PC-9 (cell line): ENCODE measurements at regions of chr20 and their contacts with region 1.

Region 1: DNA sequence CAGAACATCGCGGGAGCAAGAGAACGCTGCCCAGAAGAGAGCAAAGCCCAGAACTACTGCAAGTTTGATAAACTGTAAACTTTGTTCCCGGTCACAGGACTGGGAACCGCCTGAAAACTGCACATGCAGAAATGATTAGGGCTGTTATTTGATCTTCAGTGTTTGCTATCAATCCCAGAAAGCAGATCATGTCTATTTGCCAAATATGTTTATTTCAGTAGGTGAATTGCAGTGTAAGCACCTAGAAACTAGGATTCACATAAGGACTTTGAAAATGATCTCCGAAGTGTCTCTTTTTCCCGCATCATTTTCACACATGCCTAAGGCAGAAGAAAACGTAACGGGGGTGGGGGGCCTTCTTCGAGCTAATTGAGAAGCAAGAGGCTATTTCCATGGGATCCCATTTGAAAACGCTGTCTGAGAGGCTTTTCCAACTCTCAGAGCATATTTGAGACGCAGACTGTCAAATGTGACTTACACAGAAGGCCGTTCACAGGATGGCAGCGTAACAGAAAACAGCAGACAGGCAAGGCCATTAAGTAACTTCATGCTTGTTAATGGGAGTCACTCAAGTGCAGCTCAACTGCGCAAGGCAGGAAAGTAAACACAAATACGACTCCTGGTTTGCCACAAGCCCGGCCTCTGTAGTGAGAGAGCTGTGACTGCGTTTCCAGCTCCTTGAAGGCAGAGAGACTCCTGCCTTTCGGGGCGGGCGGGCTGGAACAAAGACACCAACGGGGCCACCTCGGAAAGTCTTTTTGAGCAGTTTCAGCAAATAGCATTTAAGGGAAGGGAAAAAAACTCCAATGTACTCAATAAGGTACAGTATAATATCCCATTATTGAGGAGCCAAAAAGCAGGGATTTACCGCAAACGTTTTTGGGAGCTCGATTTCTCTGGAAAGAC is 144.7 kb upstream of the ZNF217 start:
- DNase-seq: peak; percentile 85 to 97
- H3K4me3 ChIP-seq: peak overlapping the region; percentile 62
- H3K27ac ChIP-seq: peak overlapping the region; percentile 98
- H3K4me1 ChIP-seq: peaks cover 89% of the 10 kb centered on the region
- H3K27me3 ChIP-seq: no peaks in the 10 kb centered on the region
- CTCF ChIP-seq: no peak

Region 2: DNA sequence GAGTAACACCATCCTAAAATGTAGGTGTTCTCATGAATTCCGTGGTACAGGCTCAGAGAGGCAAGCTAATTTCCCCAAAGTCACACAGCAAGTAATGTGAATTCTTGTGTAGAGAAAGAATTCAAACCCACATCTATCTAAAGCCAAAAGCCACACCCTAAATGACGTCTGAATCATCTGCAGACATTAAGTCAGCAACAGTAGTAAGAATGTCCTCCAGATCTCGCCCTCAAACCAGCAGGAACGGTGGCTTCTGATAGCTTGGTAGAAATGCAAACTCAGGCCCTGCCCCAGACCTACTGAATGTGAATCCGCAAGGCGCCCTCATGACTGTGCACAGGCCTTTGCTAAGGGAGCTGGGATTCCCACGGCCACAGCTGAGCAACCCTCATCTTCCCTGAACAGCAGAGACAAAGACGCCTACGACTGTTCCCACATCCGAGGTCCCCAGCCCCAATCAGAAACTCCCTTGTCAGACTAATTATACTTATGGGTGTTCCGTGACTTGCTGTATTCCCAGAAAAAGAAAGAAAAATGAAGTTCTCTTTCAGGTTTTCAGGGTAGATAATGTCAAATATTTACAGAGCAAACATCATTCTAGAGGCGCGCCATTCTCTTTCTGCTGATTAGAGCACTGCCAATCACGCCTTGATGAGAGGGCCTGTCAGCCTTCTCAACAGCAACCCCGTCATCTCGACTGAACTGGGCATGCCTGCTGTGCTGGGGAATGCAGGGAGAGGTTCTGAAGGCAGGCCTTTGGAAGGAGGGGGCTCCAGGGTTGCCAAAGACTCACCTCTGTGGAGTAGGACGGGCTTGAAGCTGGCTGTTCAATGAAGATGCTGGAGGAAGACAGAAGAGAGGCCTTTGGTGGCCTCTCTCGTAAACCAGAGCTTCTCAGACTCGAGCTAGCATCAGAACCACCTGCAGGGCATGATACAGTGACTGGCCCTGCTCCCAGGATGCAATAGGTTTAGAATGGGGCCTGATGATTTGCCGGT is 224.7 kb before region 1 on chr20:
- CTCF ChIA-PET with region 1: no interaction called
- POLR2A ChIA-PET with region 1: no interaction called
- intact Hi-C with region 1: no loop called
- DNase-seq: no peak
- H3K4me3 ChIP-seq: no peak overlapping the region
- H3K27ac ChIP-seq: no peak overlapping the region
- H3K4me1 ChIP-seq: no peaks in the 10 kb centered on the region
- H3K27me3 ChIP-seq: peaks cover 17% of the 10 kb centered on the region
- CTCF ChIP-seq: no peak

Region 3: GRCh38 chr20:53623454-53624211 is 114.7 kb before region 1 on chr20:
- CTCF ChIA-PET with region 1: interaction called, 6 read pairs
- POLR2A ChIA-PET with region 1: interaction called, 7 read pairs
- intact Hi-C with region 1: loop called (anchors 1 kb)
- DNase-seq: peak; percentile 62 to 69
- H3K4me3 ChIP-seq: peak overlapping the region; percentile 58
- H3K27ac ChIP-seq: peak overlapping the region; percentile 98
- H3K4me1 ChIP-seq: peaks cover 57% of the 10 kb centered on the region
- H3K27me3 ChIP-seq: no peaks in the 10 kb centered on the region
- CTCF ChIP-seq: no peak

Region 4: DNA sequence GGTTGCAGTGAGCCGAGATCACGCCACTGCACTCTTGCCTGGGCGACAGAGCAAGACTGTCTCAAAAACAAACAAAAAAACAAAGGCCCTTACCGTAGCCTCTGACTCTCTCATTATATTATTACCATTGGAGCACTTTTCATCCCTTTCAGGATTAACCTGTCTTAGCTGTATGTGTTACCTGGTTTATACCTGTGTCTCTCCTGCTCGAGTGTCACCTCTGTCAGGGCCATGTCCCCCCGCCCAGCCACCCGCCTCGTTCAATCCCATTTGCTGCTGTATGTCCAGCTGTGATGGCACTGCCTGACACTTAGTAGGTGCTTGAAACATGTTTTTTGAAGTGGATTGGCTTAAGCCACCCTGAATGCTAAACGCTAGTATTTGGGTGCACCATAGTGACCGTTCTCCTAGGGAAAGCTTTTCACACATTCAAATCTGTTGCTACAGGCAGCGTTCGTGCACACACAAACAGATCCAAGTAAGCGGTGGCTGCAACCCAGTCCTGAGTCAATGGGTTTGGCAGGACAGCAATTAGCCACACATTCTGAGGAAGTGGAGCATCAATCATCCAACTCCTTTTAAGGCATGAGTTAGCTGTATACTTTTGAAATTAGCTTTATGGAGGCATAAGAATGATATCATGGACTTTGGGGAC is 45.8 kb before region 1 on chr20:
- CTCF ChIA-PET with region 1: no interaction called
- POLR2A ChIA-PET with region 1: interaction called, 17 read pairs
- intact Hi-C with region 1: loop called (anchors 2 kb)
- DNase-seq: no peak
- H3K4me3 ChIP-seq: no peak overlapping the region
- H3K27ac ChIP-seq: peak overlapping the region; percentile 82
- H3K4me1 ChIP-seq: peaks cover 42% of the 10 kb centered on the region
- H3K27me3 ChIP-seq: no peaks in the 10 kb centered on the region
- CTCF ChIP-seq: no peak

Region 5: GRCh38 chr20:53786445-53787267 is 48.4 kb after region 1 on chr20:
- CTCF ChIA-PET with region 1: interaction called, 3 read pairs
- POLR2A ChIA-PET with region 1: interaction called, 11 read pairs
- intact Hi-C with region 1: loop called (anchors 1 kb)
- DNase-seq: peak; percentile 44 to 97
- H3K4me3 ChIP-seq: peak overlapping the region; percentile 40; the same call in 1 of the 2 replicates
- H3K27ac ChIP-seq: peak overlapping the region; percentile 98
- H3K4me1 ChIP-seq: peaks cover 68% of the 10 kb centered on the region
- H3K27me3 ChIP-seq: no peaks in the 10 kb centered on the region
- CTCF ChIP-seq: no peak; the same call in 1 of the 2 replicates

Region 6: GRCh38 chr20:53883098-53883811 is 145.0 kb after region 1 on chr20:
- CTCF ChIA-PET with region 1: no interaction called
- POLR2A ChIA-PET with region 1: interaction called, 19 read pairs
- intact Hi-C with region 1: no loop called
- DNase-seq: peak in 1 of 2 experiments; percentile 78
- H3K4me3 ChIP-seq: no peak overlapping the region
- H3K27ac ChIP-seq: peak overlapping the region; percentile 44
- H3K4me1 ChIP-seq: peaks cover 26% of the 10 kb centered on the region
- H3K27me3 ChIP-seq: no peaks in the 10 kb centered on the region
- CTCF ChIP-seq: no peak

Region 7: GRCh38 chr20:54123587-54124180 is 385.4 kb after region 1 on chr20:
- CTCF ChIA-PET with region 1: no interaction called
- POLR2A ChIA-PET with region 1: no interaction called
- intact Hi-C with region 1: loop called (anchors 5 kb)
- DNase-seq: peak; percentile 98 to 100
- H3K4me3 ChIP-seq: peak overlapping the region; percentile 35; the same call in 1 of the 2 replicates
- H3K27ac ChIP-seq: peak overlapping the region; percentile 99
- H3K4me1 ChIP-seq: peaks cover 71% of the 10 kb centered on the region
- H3K27me3 ChIP-seq: no peaks in the 10 kb centered on the region
- CTCF ChIP-seq: no peak